Calu3 (cell line): ENCODE measurements at regions of chr6 and their contacts with region 1.

Region 1: GRCh38 chr6:125974214-125974866 is 12.0 kb upstream of the TRMT11 start:
- DNase-seq: no peak
- H3K4me3 Mint-ChIP-seq: no peak overlapping the region
- H3K27ac Mint-ChIP-seq: no peak overlapping the region
- H3K4me1 Mint-ChIP-seq: no peaks in the 10 kb centered on the region
- H3K27me3 Mint-ChIP-seq: no peaks in the 10 kb centered on the region
- CTCF ChIP-seq: no peak

Region 2: GRCh38 chr6:125779924-125780539 is 194.3 kb before region 1 on chr6:
- CTCF ChIA-PET with region 1: interaction called, 4 read pairs
- intact Hi-C with region 1: loop called (anchors 1 kb)
- DNase-seq: peak; percentile 75
- H3K4me3 Mint-ChIP-seq: no peak overlapping the region
- H3K27ac Mint-ChIP-seq: no peak overlapping the region
- H3K4me1 Mint-ChIP-seq: peaks cover 27% of the 10 kb centered on the region
- H3K27me3 Mint-ChIP-seq: no peaks in the 10 kb centered on the region
- CTCF ChIP-seq: no peak

Region 3: GRCh38 chr6:126361832-126362412 is 387.6 kb after region 1 on chr6:
- CTCF ChIA-PET with region 1: no interaction called
- intact Hi-C with region 1: no loop called
- DNase-seq: no peak
- H3K4me3 Mint-ChIP-seq: no peak overlapping the region
- H3K27ac Mint-ChIP-seq: no peak overlapping the region
- H3K4me1 Mint-ChIP-seq: no peaks in the 10 kb centered on the region
- H3K27me3 Mint-ChIP-seq: no peaks in the 10 kb centered on the region
- CTCF ChIP-seq: no peak

Region 4: DNA sequence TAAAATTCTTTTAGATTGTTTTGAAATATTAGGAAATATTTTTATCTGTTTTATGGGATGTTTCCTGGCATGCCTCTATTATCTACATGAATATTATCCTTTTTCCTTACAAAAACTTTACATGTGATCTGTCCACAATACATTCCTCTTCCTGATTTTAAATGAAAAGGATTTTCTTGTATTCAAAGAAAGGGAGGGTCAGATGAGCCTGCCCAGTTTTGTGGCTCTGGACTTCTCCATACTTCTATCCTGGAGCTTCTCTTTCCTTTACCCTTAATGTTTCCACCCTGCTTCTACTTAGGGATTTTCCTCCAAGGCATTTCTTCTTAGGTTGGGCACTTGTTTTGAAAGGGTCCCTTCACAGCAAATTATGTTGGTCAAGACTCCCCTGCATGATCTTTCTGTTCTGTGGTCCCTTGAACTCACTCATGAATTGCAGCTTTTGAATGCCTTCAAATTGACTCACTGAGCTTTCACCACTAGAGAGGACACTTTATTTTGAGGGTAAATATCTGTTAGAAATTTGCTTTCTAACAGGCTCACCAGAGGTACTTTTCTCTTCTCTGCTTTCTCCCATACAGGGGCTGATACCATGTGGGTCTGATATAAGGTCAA is 470.4 kb after region 1 on chr6:
- CTCF ChIA-PET with region 1: no interaction called
- intact Hi-C with region 1: no loop called
- DNase-seq: no peak
- H3K4me3 Mint-ChIP-seq: no peak overlapping the region
- H3K27ac Mint-ChIP-seq: no peak overlapping the region
- H3K4me1 Mint-ChIP-seq: no peaks in the 10 kb centered on the region
- H3K27me3 Mint-ChIP-seq: no peaks in the 10 kb centered on the region
- CTCF ChIP-seq: no peak